PC-3 (cell line): ENCODE measurements at regions of chr13 and their contacts with region 1.

Region 1: DNA sequence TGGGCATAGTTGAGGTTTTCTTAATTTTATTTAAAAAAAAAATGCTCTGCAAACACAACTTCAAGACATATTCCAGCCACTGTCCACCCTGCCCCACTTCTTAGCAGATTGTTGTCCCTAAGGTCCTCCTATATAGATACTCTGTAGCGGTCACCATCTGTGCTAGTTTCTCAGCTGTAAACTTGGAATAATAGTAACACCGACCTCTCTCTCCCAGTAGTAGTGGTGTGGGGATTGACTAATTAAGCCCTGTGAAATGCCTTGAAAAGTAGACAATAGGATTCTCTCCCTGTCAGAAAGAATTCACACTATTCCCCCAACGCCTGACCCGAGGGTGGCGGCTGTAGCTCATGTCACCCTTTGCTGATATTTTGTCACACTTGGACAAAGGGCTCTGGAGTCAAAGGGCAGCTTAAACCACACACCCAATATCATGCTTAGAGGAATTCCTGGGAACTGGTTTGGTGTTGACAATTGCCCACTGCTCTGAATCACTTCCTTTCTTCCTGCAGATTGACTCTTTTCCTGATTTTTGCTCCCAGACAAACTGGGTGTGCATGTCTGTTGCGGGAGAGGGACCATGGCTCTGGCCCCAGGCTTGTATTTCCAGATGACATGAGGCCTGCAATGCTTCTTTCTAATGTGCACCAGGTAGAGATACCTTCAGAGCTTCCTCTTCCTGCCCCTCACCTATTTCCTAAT is 9.1 kb upstream of the SERP2 start:
- DNase-seq: peak; percentile 91
- ATAC-seq: peak; percentile 74
- H3K4me3 ChIP-seq: no peak overlapping the region
- H3K27ac ChIP-seq: peak overlapping the region; percentile 95
- H3K4me1 ChIP-seq: peaks cover 70% of the 10 kb centered on the region
- H3K27me3 ChIP-seq: no peaks in the 10 kb centered on the region
- CTCF ChIP-seq: no peak

Region 2: DNA sequence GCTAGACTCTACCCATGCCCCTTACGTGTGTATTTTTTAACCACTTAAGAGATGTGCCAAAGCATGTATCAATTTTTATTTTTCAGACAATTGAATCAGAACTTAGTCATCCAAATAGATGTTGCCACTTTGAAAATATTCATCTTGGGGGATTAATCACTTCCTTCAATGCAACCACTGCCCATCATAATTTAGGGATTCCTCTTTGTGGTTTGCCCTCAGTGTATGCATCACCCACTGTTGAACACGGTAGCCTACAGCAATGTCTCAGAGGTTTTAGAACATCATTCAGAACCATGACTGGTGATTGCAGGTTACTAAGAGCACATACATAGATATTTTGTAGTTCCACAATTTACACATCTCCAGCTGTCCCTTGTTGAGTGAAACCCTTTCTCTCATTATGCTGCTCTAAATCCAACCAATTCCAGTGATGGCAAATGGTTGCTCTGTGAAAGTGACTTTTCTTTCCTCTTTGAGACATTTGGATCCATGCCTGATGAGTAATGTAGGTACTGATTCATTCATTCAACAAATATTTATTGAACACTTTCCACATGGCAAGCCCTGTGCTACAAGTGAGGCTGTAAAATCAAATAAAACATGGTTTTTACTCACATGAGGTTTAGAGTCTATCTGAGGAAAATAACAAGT is 51.5 kb before region 1 on chr13:
- CTCF ChIA-PET with region 1: no interaction called
- POLR2A ChIA-PET with region 1: no interaction called
- intact Hi-C with region 1: loop called (anchors 2 kb)
- DNase-seq: peak; percentile 91
- ATAC-seq: peak; percentile 60
- H3K4me3 ChIP-seq: peak overlapping the region; percentile 43; the same call in 1 of the 2 replicates
- H3K27ac ChIP-seq: peak overlapping the region; percentile 100
- H3K4me1 ChIP-seq: peaks cover 72% of the 10 kb centered on the region
- H3K27me3 ChIP-seq: no peaks in the 10 kb centered on the region
- CTCF ChIP-seq: no peak